ENCODE measurements at regions of chr7 and their contacts with region 1.

Region 1: DNA sequence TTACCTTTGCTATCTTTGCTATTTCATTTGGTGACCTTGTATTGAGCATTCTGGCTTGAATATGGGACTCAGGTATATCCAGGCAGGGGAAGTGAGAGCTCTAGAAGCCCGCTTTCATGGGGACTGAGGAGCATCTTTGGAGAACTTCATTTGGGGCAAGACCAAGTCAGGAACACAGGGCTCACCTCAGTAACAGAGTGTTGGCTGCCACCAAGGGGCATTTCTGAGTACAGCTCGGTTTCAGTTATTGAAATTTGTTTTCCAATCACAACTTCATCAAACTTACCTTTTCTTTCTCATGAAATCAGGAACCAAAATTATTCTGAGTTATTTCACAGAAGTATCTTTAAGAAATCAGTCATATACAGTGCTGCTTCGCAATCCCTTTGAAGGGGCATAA is 337.2 kb downstream of the C7orf25 start:
- DNase-seq: no peak
- H3K4me3 ChIP-seq: no peak overlapping the region
- H3K27ac ChIP-seq: peak overlapping the region in 3 of 4 donors; percentile 13 to 49 (median 20)
- H3K4me1 ChIP-seq: peaks cover 0 to 57% (median 54%) of the 10 kb centered on the region in 4 donors
- H3K27me3 ChIP-seq: no peaks in the 10 kb centered on the region
- CTCF ChIP-seq: peak; percentile 13 to 31 (median 17)
- EP300 ChIP-seq: no peak
- POLR2A ChIP-seq: no peak

Region 2: GRCh38 chr7:42493436-42494238 is 81.0 kb before region 1 on chr7:
- intact Hi-C with region 1: loop called (anchors 5 kb)
- DNase-seq: peak; percentile 96
- H3K4me3 ChIP-seq: peak overlapping the region; percentile 56 to 71 (median 56)
- H3K27ac ChIP-seq: peak overlapping the region; percentile 78 to 90 (median 82)
- H3K4me1 ChIP-seq: peaks cover 14 to 45% (median 41%) of the 10 kb centered on the region in 4 donors
- H3K27me3 ChIP-seq: no peaks in the 10 kb centered on the region
- CTCF ChIP-seq: peak in 1 of 3 experiments; percentile 17
- EP300 ChIP-seq: peak; percentile 92
- POLR2A ChIP-seq: no peak